CD14-positive monocyte (primary cell): ENCODE measurements at regions of chr3 and their contacts with region 1.

Region 1: GRCh38 chr3:151168269-151169094 is 34.5 kb downstream of the GPR171 start:
- DNase-seq: peak; percentile 58 to 85 (median 83)
- H3K4me3 ChIP-seq: no peak overlapping the region
- H3K4me3 Mint-ChIP-seq: no peak overlapping the region
- H3K27ac ChIP-seq: peak overlapping the region; percentile 90 to 94
- H3K27ac Mint-ChIP-seq: peak overlapping the region; percentile 92 to 96 (median 95)
- H3K4me1 ChIP-seq: peaks cover 41 to 44% of the 10 kb centered on the region in 2 donors
- H3K4me1 Mint-ChIP-seq: peaks cover 43% of the 10 kb centered on the region
- H3K27me3 ChIP-seq: no peaks in the 10 kb centered on the region
- H3K27me3 Mint-ChIP-seq: peaks cover 0 to 2% (median 0%) of the 10 kb centered on the region in 3 donors
- CTCF ChIP-seq: peak; percentile 86

Region 2: DNA sequence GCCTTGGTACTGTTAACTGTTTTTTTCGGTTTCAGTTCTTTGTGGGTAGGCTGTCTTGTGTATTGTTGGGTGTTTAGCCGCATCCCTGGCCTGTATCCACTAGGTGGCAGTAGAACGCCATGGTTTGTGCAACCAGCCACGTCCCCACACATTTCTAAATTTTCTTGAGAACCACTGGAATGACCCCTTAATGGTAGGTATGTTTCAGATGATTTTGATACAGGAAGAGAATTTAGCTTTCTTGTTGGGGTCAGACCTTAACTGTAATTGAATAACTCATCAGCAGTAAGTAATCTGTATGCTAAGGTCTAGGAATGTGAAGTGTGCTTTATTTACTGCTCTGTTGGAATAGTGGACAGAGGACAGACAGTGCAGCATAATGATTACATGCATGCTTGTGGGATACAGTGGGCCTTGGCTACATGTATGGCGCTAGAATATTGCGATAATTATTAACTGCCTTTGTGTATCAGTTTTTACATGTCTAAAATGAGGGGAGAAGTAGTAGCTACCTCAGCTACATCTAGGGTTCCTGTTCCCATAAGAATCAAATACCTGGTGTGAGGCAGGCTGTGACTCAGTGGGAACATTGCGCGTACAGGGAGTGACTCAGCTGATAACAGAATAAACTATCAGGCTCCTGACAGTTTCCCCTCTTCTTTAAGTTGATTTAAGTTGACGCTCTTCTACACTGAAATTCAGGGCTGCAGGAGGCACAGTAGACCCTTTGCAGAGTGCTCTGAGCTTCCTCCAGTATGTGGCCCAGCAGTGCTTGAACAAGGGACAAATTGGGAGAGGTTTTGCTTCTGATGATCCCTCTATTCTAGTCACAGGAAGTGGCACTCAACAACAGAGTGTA is 59.6 kb after region 1 on chr3:
- intact Hi-C with region 1: loop called (anchors 5 kb)
- DNase-seq: peak; percentile 68 to 77 (median 74)
- H3K4me3 ChIP-seq: no peak overlapping the region
- H3K4me3 Mint-ChIP-seq: no peak overlapping the region
- H3K27ac ChIP-seq: peak overlapping the region in 1 of 2 donors; percentile 51
- H3K27ac Mint-ChIP-seq: peak overlapping the region; percentile 55 to 87 (median 73)
- H3K4me1 ChIP-seq: peaks cover 26 to 43% of the 10 kb centered on the region in 2 donors
- H3K4me1 Mint-ChIP-seq: peaks cover 39% of the 10 kb centered on the region
- H3K27me3 ChIP-seq: no peaks in the 10 kb centered on the region
- H3K27me3 Mint-ChIP-seq: peaks cover 0 to 2% (median 0%) of the 10 kb centered on the region in 3 donors
- CTCF ChIP-seq: peak; percentile 91

Region 3: DNA sequence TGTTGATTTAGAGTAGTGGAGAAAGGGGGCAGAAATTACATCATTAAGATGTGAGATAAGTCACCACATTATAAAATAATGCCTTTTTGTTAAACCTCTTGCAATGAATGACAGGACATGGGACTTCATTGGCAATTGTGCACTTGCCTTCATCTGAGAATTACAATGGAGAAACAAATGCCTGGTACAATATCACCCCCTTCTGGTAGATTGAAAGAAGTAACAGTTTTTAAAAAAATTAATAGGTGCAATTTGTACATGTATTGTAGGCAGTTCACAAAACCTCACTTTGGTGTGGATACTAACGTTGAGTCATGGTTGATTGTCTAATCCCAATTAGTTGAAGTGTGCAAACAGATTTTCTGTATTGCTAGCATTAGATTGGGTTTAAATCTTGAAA is 114.4 kb after region 1 on chr3:
- intact Hi-C with region 1: loop called (anchors 5 kb)
- DNase-seq: peak; percentile 44 to 68 (median 62)
- H3K4me3 ChIP-seq: no peak overlapping the region
- H3K4me3 Mint-ChIP-seq: no peak overlapping the region
- H3K27ac ChIP-seq: no peak overlapping the region
- H3K27ac Mint-ChIP-seq: no peak overlapping the region
- H3K4me1 ChIP-seq: peaks cover 24 to 25% of the 10 kb centered on the region in 2 donors
- H3K4me1 Mint-ChIP-seq: peaks cover 22% of the 10 kb centered on the region
- H3K27me3 ChIP-seq: no peaks in the 10 kb centered on the region
- H3K27me3 Mint-ChIP-seq: peaks cover 0 to 2% (median 0%) of the 10 kb centered on the region in 3 donors
- CTCF ChIP-seq: peak; percentile 77

Region 4: DNA sequence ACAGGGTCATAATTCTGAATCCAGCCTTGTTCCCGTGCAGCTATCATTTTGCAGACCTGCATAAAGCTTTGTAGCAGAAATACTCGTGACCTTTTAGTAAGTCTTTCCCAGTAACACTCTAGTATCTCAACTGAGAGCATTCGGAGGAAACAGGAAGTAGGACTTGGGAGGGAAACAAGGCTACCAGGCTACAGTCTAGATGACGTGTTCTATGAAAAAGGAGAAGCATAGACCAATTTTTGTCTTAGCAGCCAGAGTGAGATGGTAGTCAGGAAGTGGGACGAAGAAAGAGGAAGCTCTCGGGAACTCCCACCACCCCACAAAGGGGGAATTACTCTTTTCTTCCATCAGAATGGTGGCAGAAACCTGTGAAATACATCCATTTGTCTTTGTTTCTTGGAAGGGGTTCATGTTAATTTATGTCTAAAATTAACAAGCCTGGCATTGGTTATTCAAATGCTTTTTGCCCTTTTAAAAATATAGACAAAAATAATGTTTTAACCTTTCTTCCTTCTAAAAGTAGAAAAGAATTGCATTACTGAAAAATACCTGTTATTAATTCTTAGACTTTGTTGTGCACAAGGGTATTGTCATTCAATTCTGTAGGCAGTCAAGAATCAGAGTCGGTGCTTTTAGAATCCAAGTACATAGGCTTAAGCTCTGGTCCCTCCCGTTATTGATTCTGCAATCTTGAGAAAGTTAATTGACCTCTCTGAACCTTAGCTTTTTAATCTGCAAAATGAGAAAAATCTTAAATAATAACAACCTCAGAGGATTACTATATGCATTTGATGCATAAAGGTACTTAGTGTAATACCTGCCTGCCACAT is 703.4 kb after region 1 on chr3:
- intact Hi-C with region 1: loop called in 1 of 2 experiments (anchors 10 kb)
- DNase-seq: peak; percentile 93 to 99 (median 99)
- H3K4me3 ChIP-seq: peak overlapping the region in 2 of 3 experiments; percentile 32 to 64
- H3K4me3 Mint-ChIP-seq: peak overlapping the region in 1 of 2 donors; percentile 80
- H3K27ac ChIP-seq: peak overlapping the region; percentile 52 to 87
- H3K27ac Mint-ChIP-seq: peak overlapping the region; percentile 90 to 96 (median 93)
- H3K4me1 ChIP-seq: peaks cover 40 to 60% of the 10 kb centered on the region in 2 donors
- H3K4me1 Mint-ChIP-seq: peaks cover 30% of the 10 kb centered on the region
- H3K27me3 ChIP-seq: no peaks in the 10 kb centered on the region
- H3K27me3 Mint-ChIP-seq: no peaks in the 10 kb centered on the region
- CTCF ChIP-seq: no peak